SK-N-SH (cell line): ENCODE measurements at regions of chr14 and their contacts with region 1.

Region 1: DNA sequence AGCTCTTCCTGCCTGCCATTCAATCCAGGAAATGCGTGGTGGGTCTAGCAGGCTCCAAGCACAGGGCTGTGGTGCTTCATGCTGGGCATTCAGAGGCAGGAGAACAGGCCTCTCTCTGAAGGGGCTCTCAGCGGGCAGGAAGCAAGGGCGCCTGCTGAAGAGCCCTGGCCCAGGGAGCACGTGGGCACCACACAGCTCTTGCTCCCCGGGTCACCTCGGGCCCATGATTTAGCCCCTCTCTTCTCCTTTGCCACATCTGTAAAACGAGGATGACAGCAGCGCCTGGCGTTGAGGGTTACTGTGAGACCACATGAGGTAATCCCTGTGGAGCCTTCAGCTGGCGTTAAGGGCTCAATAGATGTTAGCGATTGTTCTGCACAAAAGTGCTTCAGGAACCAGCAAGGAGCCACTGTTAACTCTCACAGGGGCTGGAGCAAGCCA is 37.6 kb upstream of the SPTLC2 start:
- DNase-seq: no peak
- H3K4me3 ChIP-seq: no peak overlapping the region
- H3K27ac ChIP-seq: no peak overlapping the region
- H3K4me1 ChIP-seq: peaks cover 0 to 2% of the 10 kb centered on the region in 2 experiments; a peak in 1 of 4 replicates
- H3K27me3 ChIP-seq: no peaks in the 10 kb centered on the region
- CTCF ChIP-seq: no peak
- EP300 ChIP-seq: no peak
- RAD21 ChIP-seq: no peak

Region 2: GRCh38 chr14:77485901-77486678 is 167.9 kb before region 1 on chr14:
- CTCF ChIA-PET with region 1: no interaction called
- POLR2A ChIA-PET with region 1: no interaction called
- DNase-seq: no peak
- H3K4me3 ChIP-seq: no peak overlapping the region
- H3K27ac ChIP-seq: peak overlapping the region in 1 of 2 experiments; percentile 29; a peak in 1 of 4 replicates
- H3K4me1 ChIP-seq: no peaks in the 10 kb centered on the region; a peak in 1 of 4 replicates
- H3K27me3 ChIP-seq: no peaks in the 10 kb centered on the region
- CTCF ChIP-seq: no peak
- EP300 ChIP-seq: no peak
- RAD21 ChIP-seq: no peak

Region 3: DNA sequence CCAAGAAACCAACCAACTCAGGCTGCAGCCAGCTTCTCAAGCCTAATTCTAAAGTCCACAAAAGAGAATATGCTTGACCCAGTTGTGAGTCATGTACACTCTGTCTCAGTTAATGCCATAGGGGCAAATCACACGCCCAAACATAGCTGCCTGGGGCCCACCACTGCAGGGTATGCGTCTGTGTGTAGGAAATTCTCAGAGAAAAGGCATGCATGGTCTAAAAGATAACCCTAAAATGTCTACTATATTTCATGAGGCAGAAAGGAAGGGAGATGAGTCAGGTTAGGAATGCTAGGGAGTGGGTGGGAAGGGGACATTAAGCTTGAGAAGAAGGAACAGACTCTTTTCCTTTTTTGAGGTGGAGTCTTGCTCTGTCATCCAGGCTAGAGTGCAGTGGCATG is 15.2 kb before region 1 on chr14:
- CTCF ChIA-PET with region 1: interaction called, 10 read pairs
- POLR2A ChIA-PET with region 1: no interaction called
- DNase-seq: no peak
- H3K4me3 ChIP-seq: no peak overlapping the region
- H3K27ac ChIP-seq: peak overlapping the region in 1 of 2 experiments; percentile 93; a peak in 2 of 4 replicates
- H3K4me1 ChIP-seq: 0 out of 4 replicates have a peak, but pooled peaks cover 0 to 3% of the 10 kb centered on the region in 2 experiments
- H3K27me3 ChIP-seq: no peaks in the 10 kb centered on the region
- CTCF ChIP-seq: no peak
- EP300 ChIP-seq: peak in 1 of 2 experiments; percentile 75; a peak in 1 of 4 replicates
- RAD21 ChIP-seq: no peak

Region 4: GRCh38 chr14:77707724-77708408 is 53.8 kb after region 1 on chr14 and contains the starts of genes ALKBH1 and SLIRP:
- CTCF ChIA-PET with region 1: interaction called, 10 read pairs
- POLR2A ChIA-PET with region 1: no interaction called
- DNase-seq: peak; percentile 89
- H3K4me3 ChIP-seq: peak within 1 kb of the TSS; percentile 86 to 96
- H3K27ac ChIP-seq: peak within 1 kb of the TSS; percentile 62 to 71
- H3K4me1 ChIP-seq: peaks cover 17 to 19% of the 10 kb centered on the region in 2 experiments; a peak in 3 of 4 replicates
- H3K27me3 ChIP-seq: no peaks in the 10 kb centered on the region
- CTCF ChIP-seq: no peak
- EP300 ChIP-seq: no peak
- RAD21 ChIP-seq: no peak
- polyA plus RNA-seq, gene ALKBH1: 10.7 and 12.7 TPM in 2 replicates
- polyA plus RNA-seq, gene SLIRP: 306 and 347 TPM in 2 replicates